Activated T-helper 1 cell treated with anti-CD3 and anti-CD28 coated beads, Interleukin-12 subunit alpha, Interleukin-12 subunit beta, Interleukin-2, Interleukin-4 antibody, amounts not matched to agents 30 ng/mL and 10 ng/mL and 1 ng/mL, durations not matched to agents 14 hours and 24 hours and 36 hours (primary cell): ENCODE measurements at regions of chr15 and their contacts with region 1.

Region 1: GRCh38 chr15:57561041-57561711 is 30.5 kb upstream of the MYZAP start:
- DNase-seq: peak; percentile 51
- H3K4me3 Mint-ChIP-seq: peak overlapping the region; percentile 27
- H3K27ac Mint-ChIP-seq: peak overlapping the region; percentile 88
- H3K4me1 Mint-ChIP-seq: peaks cover 42% of the 10 kb centered on the region
- H3K27me3 Mint-ChIP-seq: peaks cover 9% of the 10 kb centered on the region

Region 2: GRCh38 chr15:56272454-56272853 is 1288.7 kb before region 1 on chr15:
- intact Hi-C with region 1: no loop called
- DNase-seq: no peak
- H3K4me3 Mint-ChIP-seq: no peak overlapping the region
- H3K27ac Mint-ChIP-seq: no peak overlapping the region
- H3K4me1 Mint-ChIP-seq: no peaks in the 10 kb centered on the region
- H3K27me3 Mint-ChIP-seq: no peaks in the 10 kb centered on the region

Region 3: DNA sequence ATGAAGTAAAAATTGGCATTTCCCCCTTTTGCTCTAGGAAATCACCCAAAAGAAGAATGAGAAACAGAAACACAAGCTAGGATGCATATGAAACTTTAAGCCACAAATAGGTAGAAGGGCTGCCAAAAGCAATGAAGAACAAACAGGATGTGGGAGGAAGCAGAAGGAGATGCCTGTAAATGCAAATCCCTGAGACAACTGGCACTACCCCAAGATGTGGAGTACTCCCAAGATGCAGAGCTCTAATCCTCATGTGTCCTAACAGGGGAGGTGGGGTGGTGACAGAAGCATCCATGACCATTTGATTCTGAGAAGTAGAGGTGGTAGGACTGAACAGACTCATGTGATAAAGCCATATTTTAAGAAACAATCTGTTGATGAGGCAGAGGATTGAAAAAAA is 795.9 kb before region 1 on chr15:
- intact Hi-C with region 1: loop called (anchors 5 kb)
- DNase-seq: peak; percentile 10
- H3K4me3 Mint-ChIP-seq: peak overlapping the region; percentile 16
- H3K27ac Mint-ChIP-seq: peak overlapping the region; percentile 83
- H3K4me1 Mint-ChIP-seq: peaks cover 40% of the 10 kb centered on the region
- H3K27me3 Mint-ChIP-seq: no peaks in the 10 kb centered on the region

Region 4: GRCh38 chr15:57640935-57641682 is 79.9 kb after region 1 on chr15:
- intact Hi-C with region 1: loop called (anchors 5 kb)
- DNase-seq: no peak
- H3K4me3 Mint-ChIP-seq: no peak overlapping the region
- H3K27ac Mint-ChIP-seq: no peak overlapping the region
- H3K4me1 Mint-ChIP-seq: no peaks in the 10 kb centered on the region
- H3K27me3 Mint-ChIP-seq: peaks cover 15% of the 10 kb centered on the region

Region 5: GRCh38 chr15:57706405-57707209 is 145.4 kb after region 1 on chr15 and contains the start of gene POLR2M:
- intact Hi-C with region 1: loop called (anchors 1 kb)
- DNase-seq: peak; percentile 82
- H3K4me3 Mint-ChIP-seq: peak within 1 kb of the TSS; percentile 82
- H3K27ac Mint-ChIP-seq: peak within 1 kb of the TSS; percentile 84
- H3K4me1 Mint-ChIP-seq: peaks cover 70% of the 10 kb centered on the region
- H3K27me3 Mint-ChIP-seq: no peaks in the 10 kb centered on the region
- total RNA-seq, gene POLR2M: 60.3 and 62.4 TPM in 2 replicates

Region 6: DNA sequence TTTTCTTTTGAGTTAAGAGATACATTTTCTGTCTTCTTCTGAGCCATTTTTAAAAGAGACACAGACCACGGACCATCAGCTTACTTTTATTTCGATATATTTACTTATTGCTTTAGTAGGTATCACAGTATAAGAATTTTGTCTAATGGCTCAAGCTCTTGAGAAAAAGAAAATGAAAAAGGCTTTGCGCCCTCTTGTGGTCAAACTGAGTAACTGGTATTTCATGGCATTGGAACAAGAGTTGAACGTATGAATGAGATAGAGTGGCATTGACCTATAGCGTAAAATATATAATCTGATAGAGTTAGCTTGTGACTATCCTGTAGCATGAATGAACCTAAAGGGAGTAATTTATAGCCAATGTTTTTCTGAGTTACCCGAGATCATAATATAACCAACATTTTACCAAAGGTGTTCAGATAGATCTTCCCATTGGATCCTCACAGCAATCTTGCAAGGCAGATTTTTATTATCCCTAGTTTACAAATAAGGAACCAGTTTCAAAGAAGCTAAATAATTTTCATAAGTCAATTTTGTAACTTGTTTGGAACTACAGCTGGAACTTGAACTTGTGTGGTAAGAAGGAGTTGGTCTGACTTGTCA is 300.0 kb after region 1 on chr15:
- intact Hi-C with region 1: loop called (anchors 1 kb)
- DNase-seq: peak; percentile 17
- H3K4me3 Mint-ChIP-seq: no peak overlapping the region
- H3K27ac Mint-ChIP-seq: no peak overlapping the region
- H3K4me1 Mint-ChIP-seq: peaks cover 26% of the 10 kb centered on the region
- H3K27me3 Mint-ChIP-seq: peaks cover 18% of the 10 kb centered on the region